ENCODE measurements at regions of chr2 and their contacts with region 1.

Region 1: GRCh38 chr2:149017116-149017985 is 21.1 kb upstream of the LYPD6B start:
- DNase-seq: peak; percentile 43
- ATAC-seq: peak; percentile 87
- H3K4me3 ChIP-seq: no peak overlapping the region
- H3K27ac ChIP-seq: no peak overlapping the region
- H3K4me1 ChIP-seq: no peaks in the 10 kb centered on the region
- H3K27me3 ChIP-seq: no peaks in the 10 kb centered on the region
- CTCF ChIP-seq: peak; percentile 90

Region 2: DNA sequence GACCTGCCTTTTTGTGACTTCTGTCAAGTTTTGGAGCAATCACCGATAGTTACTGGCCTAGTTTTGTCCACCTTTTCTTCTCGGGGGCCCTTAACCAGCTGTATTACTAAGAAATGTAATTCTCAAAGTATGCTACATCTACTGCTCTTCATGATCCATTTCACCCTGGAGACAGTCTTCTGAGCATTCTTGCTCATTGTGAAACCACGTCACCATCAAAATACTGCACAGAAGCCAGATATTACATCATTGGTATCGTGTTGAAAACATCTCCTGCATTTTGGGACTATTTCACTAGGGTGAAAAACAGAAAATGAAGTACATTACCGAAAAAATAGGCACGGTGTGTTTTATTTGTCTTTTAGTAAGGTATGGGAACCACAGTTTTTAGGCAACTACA is 32.8 kb after region 1 on chr2:
- CTCF ChIA-PET with region 1: interaction called, 16 read pairs
- POLR2A ChIA-PET with region 1: no interaction called
- in situ Hi-C with region 1: no loop called
- intact Hi-C with region 1: no loop called
- DNase-seq: no peak
- ATAC-seq: no peak
- H3K4me3 ChIP-seq: no peak overlapping the region
- H3K27ac ChIP-seq: no peak overlapping the region
- H3K4me1 ChIP-seq: no peaks in the 10 kb centered on the region
- H3K27me3 ChIP-seq: no peaks in the 10 kb centered on the region
- CTCF ChIP-seq: no peak

Region 3: GRCh38 chr2:149307014-149307413 is 289.7 kb after region 1 on chr2:
- CTCF ChIA-PET with region 1: no interaction called
- POLR2A ChIA-PET with region 1: no interaction called
- in situ Hi-C with region 1: no loop called
- intact Hi-C with region 1: loop called (anchors 10 kb)
- DNase-seq: no peak
- ATAC-seq: no peak
- H3K4me3 ChIP-seq: no peak overlapping the region
- H3K27ac ChIP-seq: no peak overlapping the region
- H3K4me1 ChIP-seq: no peaks in the 10 kb centered on the region
- H3K27me3 ChIP-seq: no peaks in the 10 kb centered on the region; the same call in 1 of the 2 replicates
- CTCF ChIP-seq: no peak

Region 4: DNA sequence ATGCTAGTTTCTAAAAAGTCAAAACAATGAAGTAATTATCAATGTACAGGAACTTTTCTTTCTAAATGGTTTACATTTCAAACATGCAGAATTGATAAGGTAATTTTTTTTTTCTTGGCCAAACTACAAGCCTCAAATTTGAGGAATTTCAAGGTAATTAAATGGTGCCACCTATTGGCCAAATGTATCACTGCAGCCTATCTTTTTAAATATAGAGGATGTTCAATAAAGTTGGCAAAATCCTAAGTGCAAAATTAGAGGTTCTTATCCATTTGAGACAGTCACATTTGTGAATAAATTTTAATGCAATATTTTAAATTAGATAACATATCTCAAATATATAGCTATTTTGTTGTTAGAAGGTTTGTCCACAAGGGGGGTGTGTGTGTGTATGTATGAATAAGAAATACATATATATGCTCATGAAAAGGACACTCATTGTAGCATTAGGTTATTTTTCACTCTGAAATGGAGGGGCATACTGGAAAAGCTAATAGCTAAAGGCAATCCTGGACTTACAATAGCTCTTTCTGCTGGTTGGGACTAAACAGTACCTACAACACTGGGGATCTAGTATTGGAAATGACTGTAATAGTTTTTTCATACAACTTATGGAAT is 544.1 kb after region 1 on chr2:
- CTCF ChIA-PET with region 1: interaction called, 16 read pairs
- POLR2A ChIA-PET with region 1: no interaction called
- in situ Hi-C with region 1: no loop called
- intact Hi-C with region 1: loop called (anchors 1 kb)
- DNase-seq: no peak
- ATAC-seq: no peak
- H3K4me3 ChIP-seq: no peak overlapping the region
- H3K27ac ChIP-seq: no peak overlapping the region
- H3K4me1 ChIP-seq: peaks cover 11% of the 10 kb centered on the region
- H3K27me3 ChIP-seq: no peaks in the 10 kb centered on the region
- CTCF ChIP-seq: peak; percentile 86; the same call in 1 of the 2 replicates